Right lobe of liver (tissue), 6 donors: ENCODE measurements at regions of chr20 and their contacts with region 1.

Region 1: DNA sequence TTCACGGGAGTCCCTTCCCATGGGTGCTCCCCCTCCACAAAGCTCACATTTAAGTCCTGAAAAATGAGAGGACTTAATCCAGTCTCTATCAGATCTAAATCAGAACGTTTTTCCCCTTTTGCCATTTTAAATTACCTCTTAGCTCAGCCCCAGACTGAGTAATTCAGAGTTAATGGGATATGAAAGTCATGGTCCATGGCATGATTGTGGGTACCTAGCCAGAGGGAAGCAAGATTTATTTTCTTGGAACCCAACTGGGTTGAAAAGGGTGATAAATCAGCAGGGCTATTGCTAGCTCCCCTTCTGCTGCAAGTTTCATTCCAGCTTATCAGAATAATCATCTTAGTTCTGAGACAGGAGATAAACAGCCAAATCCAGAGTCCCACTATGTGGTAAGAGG is 320.2 kb upstream of the CHD6 start:
- DNase-seq: no peak
- ATAC-seq: no peak
- H3K4me3 ChIP-seq: no peak overlapping the region
- H3K27ac ChIP-seq: no peak overlapping the region
- H3K4me1 ChIP-seq: no peaks in the 10 kb centered on the region
- H3K27me3 ChIP-seq: no peaks in the 10 kb centered on the region
- CTCF ChIP-seq: no peak
- POLR2A ChIP-seq: no peak

Region 2: GRCh38 chr20:41509316-41510200 is 428.8 kb before region 1 on chr20:
- intact Hi-C with region 1: no loop called
- DNase-seq: peak; percentile 61 to 83 (median 78)
- ATAC-seq: peak; percentile 85 to 89 (median 88)
- H3K4me3 ChIP-seq: no peak overlapping the region
- H3K27ac ChIP-seq: peak overlapping the region in 1 of 3 donors; percentile 25
- H3K4me1 ChIP-seq: peaks cover 0 to 68% (median 22%) of the 10 kb centered on the region in 4 donors
- H3K27me3 ChIP-seq: no peaks in the 10 kb centered on the region
- CTCF ChIP-seq: no peak
- POLR2A ChIP-seq: no peak

Region 3: GRCh38 chr20:41693136-41693979 is 245.0 kb before region 1 on chr20:
- intact Hi-C with region 1: no loop called
- DNase-seq: peak; percentile 80 to 83 (median 82)
- ATAC-seq: peak; percentile 90 to 94 (median 93)
- H3K4me3 ChIP-seq: peak overlapping the region; percentile 50 to 88 (median 75)
- H3K27ac ChIP-seq: peak overlapping the region; percentile 69 to 78 (median 77)
- H3K4me1 ChIP-seq: peaks cover 0 to 5% (median 0%) of the 10 kb centered on the region in 4 donors
- H3K27me3 ChIP-seq: no peaks in the 10 kb centered on the region
- CTCF ChIP-seq: peak; percentile 42 to 70 (median 56)
- POLR2A ChIP-seq: peak; percentile 59

Region 4: GRCh38 chr20:41769592-41770018 is 168.7 kb before region 1 on chr20:
- intact Hi-C with region 1: no loop called
- DNase-seq: no peak
- ATAC-seq: no peak
- H3K4me3 ChIP-seq: no peak overlapping the region
- H3K27ac ChIP-seq: no peak overlapping the region
- H3K4me1 ChIP-seq: peaks cover 0 to 6% (median 0%) of the 10 kb centered on the region in 4 donors
- H3K27me3 ChIP-seq: no peaks in the 10 kb centered on the region
- CTCF ChIP-seq: no peak
- POLR2A ChIP-seq: no peak

Region 5: GRCh38 chr20:41989935-41990635 is 51.7 kb after region 1 on chr20:
- intact Hi-C with region 1: loop called in 1 of 2 experiments (anchors 10 kb)
- DNase-seq: no peak
- ATAC-seq: no peak
- H3K4me3 ChIP-seq: no peak overlapping the region
- H3K27ac ChIP-seq: no peak overlapping the region
- H3K4me1 ChIP-seq: no peaks in the 10 kb centered on the region
- H3K27me3 ChIP-seq: no peaks in the 10 kb centered on the region
- CTCF ChIP-seq: no peak
- POLR2A ChIP-seq: no peak

Region 6: DNA sequence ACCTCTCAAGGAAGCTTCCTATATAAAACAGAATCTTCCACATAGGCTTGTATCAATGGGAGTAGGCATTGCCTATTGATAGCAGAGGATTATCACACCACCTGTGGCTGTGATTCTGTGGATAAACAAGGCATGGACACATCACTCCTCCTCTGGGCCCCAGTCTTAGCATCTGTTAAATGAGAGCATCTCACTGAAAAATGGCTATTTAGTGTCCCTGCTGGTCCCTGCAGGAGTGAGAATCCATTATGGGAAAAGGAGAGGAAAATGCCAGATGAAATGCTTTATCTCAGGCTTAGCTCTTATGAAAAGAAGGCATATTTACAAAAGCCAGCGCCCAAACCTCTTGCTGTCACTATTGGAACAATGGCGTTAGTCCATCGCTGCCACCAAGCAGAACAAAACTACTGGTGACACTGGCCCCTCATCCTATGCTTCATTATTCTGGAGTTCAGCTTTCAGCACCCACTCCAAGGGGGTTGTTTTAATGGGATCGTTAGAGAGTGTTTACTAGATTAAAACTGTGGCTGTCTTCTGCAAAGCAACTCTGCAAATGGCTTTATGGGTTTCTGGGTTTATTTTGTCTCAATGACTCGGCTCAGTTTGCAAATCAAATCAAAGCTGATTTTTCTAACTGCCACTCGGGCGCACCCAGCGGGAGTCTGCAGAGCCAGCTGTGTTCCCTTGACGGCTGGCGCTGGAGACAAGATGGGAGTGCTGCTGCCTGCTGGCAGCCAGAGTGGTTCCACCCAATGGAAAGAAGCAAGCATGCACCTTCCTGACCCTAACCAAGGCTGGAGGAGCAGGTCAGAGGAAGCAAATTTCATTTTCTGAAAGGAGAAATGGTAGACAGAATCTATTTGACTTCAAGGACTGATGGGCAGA is 338.6 kb after region 1 on chr20:
- intact Hi-C with region 1: no loop called
- DNase-seq: no peak
- ATAC-seq: no peak
- H3K4me3 ChIP-seq: no peak overlapping the region
- H3K27ac ChIP-seq: no peak overlapping the region
- H3K4me1 ChIP-seq: no peaks in the 10 kb centered on the region
- H3K27me3 ChIP-seq: no peaks in the 10 kb centered on the region
- CTCF ChIP-seq: no peak
- POLR2A ChIP-seq: no peak